ENCODE measurements at regions of chr1 and their contacts with region 1.

Region 1: GRCh38 chr1:53485478-53486394 is 26.5 kb downstream of the DMRTB1 start:
- DNase-seq: peak; percentile 9
- H3K4me3 ChIP-seq: no peak overlapping the region
- H3K27ac ChIP-seq: no peak overlapping the region
- H3K4me1 ChIP-seq: no peaks in the 10 kb centered on the region
- H3K27me3 ChIP-seq: peaks cover 13% of the 10 kb centered on the region
- CTCF ChIP-seq: peak; percentile 88 to 96 (median 88)

Region 2: GRCh38 chr1:53754484-53755312 is 269.0 kb after region 1 on chr1:
- dilution Hi-C with region 1: loop called (anchors 25 kb)
- DNase-seq: no peak
- H3K4me3 ChIP-seq: no peak overlapping the region
- H3K27ac ChIP-seq: no peak overlapping the region
- H3K4me1 ChIP-seq: no peaks in the 10 kb centered on the region
- H3K27me3 ChIP-seq: no peaks in the 10 kb centered on the region
- CTCF ChIP-seq: peak; percentile 63 to 76 (median 71)

Measured in keratinocyte (primary cell).